ENCODE measurements at regions of chr14 and their contacts with region 1.

Region 1: DNA sequence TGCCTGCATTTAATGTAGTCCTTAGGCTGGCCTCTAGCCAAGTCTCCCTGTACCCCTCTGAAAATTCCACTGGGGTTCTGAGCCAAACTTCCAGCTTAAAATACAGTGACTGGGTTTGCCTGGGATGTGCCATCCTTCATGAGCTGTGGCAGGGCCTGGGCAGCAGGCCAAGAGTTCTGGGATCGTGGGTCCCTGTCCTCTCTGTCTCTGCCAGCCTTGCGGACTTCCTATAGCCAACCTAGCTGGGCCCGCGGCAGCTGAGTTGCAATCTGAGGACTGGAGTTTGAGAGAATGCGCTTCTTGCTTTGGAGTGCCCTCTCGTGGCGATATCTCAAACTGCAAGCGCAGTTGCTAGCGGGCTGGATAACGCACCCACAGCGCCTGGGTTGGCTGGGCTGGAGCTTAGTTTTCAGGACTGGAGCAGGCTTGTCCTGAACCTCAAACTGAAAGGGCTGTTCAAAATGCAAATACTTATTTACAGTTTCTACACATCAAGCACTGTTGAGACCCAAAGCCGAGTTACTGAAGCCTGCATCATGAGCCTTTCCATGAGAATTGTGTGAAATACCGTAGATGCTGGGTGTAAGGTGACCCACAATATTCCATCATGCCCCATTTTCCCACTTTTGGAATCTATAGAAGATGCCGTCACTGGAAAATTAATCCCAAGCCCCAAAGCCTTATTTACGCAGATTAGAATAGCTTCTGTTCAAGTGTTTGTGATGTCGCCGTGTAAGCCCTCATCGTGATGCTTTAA is 7.3 kb upstream of the IFI27L2 start:
- DNase-seq: peak; percentile 57
- H3K4me3 ChIP-seq: no peak overlapping the region
- H3K27ac ChIP-seq: no peak overlapping the region
- H3K27me3 ChIP-seq: peaks cover 5% of the 10 kb centered on the region
- CTCF ChIP-seq: peak; percentile 99

Region 2: GRCh38 chr14:93263416-93263815 is 873.3 kb before region 1 on chr14:
- CTCF ChIA-PET with region 1: no interaction called
- POLR2A ChIA-PET with region 1: no interaction called
- DNase-seq: no peak
- H3K4me3 ChIP-seq: no peak overlapping the region
- H3K27ac ChIP-seq: no peak overlapping the region
- H3K27me3 ChIP-seq: no peaks in the 10 kb centered on the region
- CTCF ChIP-seq: no peak

Region 3: DNA sequence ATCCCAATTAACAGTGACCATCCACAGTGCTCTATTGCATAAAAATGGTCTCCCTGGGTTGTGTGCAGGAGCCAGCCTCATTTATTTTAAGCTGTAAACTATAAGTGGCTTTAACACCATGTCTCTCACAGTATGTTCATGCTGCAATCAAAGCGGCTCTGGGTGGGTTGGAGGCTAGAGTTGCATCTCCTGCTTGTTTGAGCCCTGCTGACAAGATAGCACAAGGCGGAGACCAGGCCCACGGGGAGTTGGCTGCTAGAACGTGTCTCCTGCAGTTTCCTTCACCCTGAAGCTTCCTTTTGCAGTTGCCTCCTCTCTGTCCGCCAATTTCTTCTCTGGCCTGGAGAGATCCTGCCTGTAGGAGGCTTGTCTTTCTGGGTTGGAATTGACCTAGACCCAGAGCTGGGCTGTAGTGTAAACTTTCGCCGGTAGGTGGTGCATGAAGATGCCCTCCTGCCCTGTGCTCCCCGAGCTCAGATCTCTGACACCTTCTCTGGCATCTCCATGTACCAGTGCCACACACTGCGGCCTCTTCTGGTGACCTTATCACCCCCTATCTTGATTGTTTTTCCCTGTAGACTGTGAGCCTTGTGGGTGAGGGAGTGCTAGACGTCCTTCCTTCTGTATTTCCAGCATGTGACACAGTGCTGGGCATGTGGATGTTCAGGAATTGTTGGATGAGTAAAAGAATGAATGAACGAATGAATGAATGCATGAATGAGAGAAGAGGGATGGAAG is 100.3 kb before region 1 on chr14:
- CTCF ChIA-PET with region 1: interaction called, 183 read pairs
- POLR2A ChIA-PET with region 1: no interaction called
- DNase-seq: peak; percentile 34
- H3K4me3 ChIP-seq: no peak overlapping the region
- H3K27ac ChIP-seq: no peak overlapping the region
- H3K27me3 ChIP-seq: no peaks in the 10 kb centered on the region
- CTCF ChIP-seq: peak; percentile 84

Region 4: DNA sequence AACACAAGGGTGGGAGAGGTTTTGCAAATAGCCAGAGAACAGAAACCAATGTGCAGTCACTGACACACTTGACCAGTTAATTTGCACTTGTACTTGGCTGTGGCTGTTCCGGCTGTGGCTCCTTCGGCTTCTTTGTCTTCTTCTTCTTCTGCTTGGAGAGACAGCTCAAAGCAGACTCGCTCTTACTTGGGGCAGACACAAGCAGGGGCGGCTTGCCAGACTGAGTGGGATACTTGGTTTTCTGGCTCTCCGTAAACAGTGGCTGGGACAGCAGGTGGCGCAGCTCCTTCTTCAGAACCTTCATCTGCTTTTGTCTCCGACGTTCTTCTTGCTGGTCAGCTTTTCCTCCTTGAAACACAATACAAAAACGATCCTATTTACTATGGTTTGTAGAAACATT is 85.6 kb before region 1 on chr14:
- CTCF ChIA-PET with region 1: interaction called, 68 read pairs
- POLR2A ChIA-PET with region 1: no interaction called
- DNase-seq: peak; percentile 15
- H3K4me3 ChIP-seq: no peak overlapping the region
- H3K27ac ChIP-seq: no peak overlapping the region
- H3K27me3 ChIP-seq: no peaks in the 10 kb centered on the region
- CTCF ChIP-seq: peak; percentile 57

Region 5: DNA sequence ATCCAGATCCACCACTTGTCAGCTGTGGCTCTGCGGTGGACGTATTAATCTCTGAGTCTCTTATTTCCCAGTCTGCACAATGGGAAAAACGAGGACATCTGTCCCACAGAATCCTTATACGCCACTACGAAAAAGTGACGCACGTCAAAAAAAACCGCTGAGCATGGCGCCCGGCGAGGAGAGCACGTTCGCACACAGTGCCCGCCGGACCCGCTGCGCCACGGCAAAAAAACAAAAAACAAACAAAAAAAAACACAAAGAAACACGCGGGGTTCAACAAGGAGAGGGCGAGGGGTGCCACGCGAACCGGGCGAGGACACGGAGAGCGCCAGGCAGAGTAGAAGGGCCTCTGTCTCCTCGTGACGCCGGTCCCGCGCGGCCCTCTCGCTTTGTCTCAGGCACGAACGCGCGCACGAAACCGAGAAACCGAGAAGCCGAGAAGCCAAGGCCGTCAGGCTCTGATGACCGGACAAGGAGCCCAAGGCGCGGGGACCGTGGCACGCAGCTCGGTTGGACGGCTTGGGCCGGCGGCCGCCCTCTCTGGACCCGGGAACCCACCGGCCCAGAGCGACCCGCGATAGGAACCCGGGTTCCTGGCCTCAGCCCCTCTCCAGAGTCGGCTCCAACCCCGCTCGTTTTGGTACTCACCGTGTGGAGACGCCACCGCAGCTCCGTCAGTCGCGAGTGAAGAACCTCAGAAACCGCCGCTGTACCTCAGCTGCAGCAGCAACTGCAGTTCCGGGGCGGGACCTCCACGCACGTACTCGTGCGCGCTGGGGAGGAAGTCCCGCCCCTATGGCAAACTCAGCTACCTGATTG is 56.1 kb before region 1 on chr14 and contains the start of gene DDX24:
- CTCF ChIA-PET with region 1: interaction called, 64 read pairs
- POLR2A ChIA-PET with region 1: interaction called, 3 read pairs
- DNase-seq: peak; percentile 86
- H3K4me3 ChIP-seq: peak within 1 kb of the TSS; percentile 93
- H3K27ac ChIP-seq: peak within 1 kb of the TSS; percentile 82
- H3K27me3 ChIP-seq: no peaks in the 10 kb centered on the region
- CTCF ChIP-seq: no peak
- polyA plus RNA-seq, gene DDX24: 145 and 159 TPM in 2 replicates

Region 6: DNA sequence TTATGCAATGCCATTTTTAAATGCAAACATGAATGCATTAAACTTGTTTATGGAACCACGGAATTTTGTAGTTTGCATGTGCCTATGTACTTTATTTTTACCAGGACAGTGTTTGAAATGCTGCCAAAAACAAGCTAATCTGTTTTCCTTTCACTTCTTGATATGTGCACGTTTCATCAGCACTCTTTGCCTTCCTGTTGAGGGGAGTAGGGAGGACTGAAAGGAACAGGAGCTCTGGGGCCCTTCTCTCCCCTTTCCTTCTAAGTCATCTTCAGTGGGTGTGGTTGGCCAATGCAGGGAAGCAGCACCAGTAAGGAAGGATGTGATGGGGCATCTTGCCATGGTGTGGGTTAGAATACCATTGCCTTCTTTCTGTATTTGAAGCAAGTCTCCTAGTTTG is 25.2 kb after region 1 on chr14:
- CTCF ChIA-PET with region 1: interaction called, 11 read pairs
- POLR2A ChIA-PET with region 1: no interaction called
- DNase-seq: no peak
- H3K4me3 ChIP-seq: no peak overlapping the region
- H3K27ac ChIP-seq: no peak overlapping the region
- H3K27me3 ChIP-seq: peaks cover 15% of the 10 kb centered on the region
- CTCF ChIP-seq: no peak

Region 7: GRCh38 chr14:94180655-94181271 is 44.0 kb after region 1 on chr14:
- CTCF ChIA-PET with region 1: interaction called, 44 read pairs
- POLR2A ChIA-PET with region 1: no interaction called
- DNase-seq: no peak
- H3K4me3 ChIP-seq: no peak overlapping the region
- H3K27ac ChIP-seq: no peak overlapping the region
- H3K27me3 ChIP-seq: peaks cover 11% of the 10 kb centered on the region
- CTCF ChIP-seq: peak; percentile 70